Breast epithelium (tissue), 4 donors: ENCODE measurements at regions of chr19 and their contacts with region 1.

Region 1: DNA sequence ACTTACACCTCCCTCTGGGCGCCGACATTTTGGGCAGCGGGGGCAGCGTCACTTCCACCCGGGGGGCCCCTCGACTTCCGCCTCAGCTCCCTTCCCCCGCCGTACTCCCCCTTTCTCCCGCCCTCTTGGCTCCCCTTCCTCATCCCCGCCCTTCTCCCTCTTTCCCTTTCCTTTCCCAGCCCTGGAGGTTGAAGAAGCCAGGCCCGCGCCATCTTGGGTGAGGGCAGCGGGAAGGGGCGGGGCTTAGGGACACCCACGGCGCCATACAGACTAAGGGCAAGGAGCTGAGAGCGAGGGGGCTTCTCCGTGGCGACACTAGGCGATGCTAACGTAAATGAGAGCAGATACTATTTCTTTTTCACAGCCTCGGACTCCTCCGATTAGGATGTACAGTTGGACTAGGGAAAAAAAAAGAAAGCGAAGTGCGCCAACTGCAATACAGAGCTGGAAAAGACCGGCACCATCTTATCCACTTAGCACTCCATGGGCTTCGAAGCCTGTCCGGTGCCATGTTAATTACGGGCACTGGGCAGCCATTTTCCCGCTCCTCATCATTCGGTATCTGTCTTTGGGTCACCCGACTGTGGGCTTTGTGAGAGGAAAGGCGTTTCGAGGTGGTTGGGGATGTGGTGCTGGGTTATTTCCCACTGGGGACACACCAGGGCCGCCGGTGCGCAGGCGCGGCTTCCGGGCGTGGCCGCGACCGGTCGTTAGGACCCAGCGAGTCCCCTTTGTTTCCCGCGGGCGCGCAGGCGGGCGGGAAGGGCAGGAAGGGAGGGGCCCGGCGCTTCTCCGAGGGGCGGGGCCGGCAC is at the start of gene FIZ1:
- DNase-seq: peak; percentile 99
- H3K4me3 ChIP-seq: peak within 1 kb of the TSS; percentile 76 to 98 (median 81)
- H3K27ac ChIP-seq: peak within 1 kb of the TSS; percentile 98 to 100
- H3K4me1 ChIP-seq: no peaks in the 10 kb centered on the region
- H3K27me3 ChIP-seq: no peaks in the 10 kb centered on the region
- CTCF ChIP-seq: peak in 1 of 3 donors; percentile 29
- POLR2A ChIP-seq: no peak
- total RNA-seq, gene FIZ1: 3.7 to 7.5 (median 6.1) TPM

Region 2: GRCh38 chr19:55586976-55587668 is 12.6 kb before region 1 on chr19:
- intact Hi-C with region 1: loop called (anchors 1 kb)
- DNase-seq: peak; percentile 95 to 98
- H3K4me3 ChIP-seq: peak overlapping the region; percentile 6 to 62 (median 52)
- H3K27ac ChIP-seq: peak overlapping the region; percentile 58 to 71
- H3K4me1 ChIP-seq: no peaks in the 10 kb centered on the region
- H3K27me3 ChIP-seq: no peaks in the 10 kb centered on the region
- CTCF ChIP-seq: no peak
- POLR2A ChIP-seq: no peak

Region 3: DNA sequence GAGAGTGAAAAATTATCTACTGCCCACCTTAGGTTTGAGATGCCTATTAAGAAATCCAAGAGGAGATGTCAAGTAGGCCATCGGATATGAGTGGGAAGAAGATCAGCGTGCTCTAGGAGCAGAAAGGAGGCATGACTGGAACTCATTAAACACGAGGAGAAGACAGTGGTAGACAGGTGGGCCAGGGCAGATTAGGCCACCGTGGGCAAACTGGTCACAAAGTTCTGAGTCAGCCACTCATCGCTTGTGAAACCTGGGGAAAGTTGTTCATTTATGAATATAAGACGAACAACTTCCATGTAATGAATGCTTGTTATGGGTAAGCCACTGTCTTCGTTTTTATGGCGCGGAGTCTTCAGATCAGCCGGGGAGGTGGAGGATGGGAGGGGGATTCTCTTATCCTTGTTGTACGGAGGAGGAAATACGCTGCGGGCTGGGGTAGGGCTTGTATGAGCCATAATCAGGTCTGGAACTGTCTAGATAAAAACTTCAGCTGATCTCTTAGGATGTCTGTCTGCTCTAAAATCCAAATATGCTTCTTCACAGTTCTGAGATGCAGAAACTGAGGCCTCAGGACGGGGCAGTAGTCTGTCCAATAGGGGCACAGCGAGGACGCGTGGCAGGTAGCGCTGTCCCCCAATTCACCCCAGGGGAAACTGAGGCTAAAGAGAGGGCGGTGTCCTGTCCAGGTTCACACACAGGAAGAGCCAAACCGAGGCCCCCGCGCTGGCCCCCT is 540.3 kb after region 1 on chr19:
- intact Hi-C with region 1: loop called (anchors 5 kb)
- DNase-seq: peak in 1 of 2 donors; percentile 35
- H3K4me3 ChIP-seq: peak overlapping the region; percentile 60 to 76 (median 67)
- H3K27ac ChIP-seq: peak overlapping the region; percentile 97 to 98
- H3K4me1 ChIP-seq: peaks cover 0 to 22% of the 10 kb centered on the region in 2 donors
- H3K27me3 ChIP-seq: no peaks in the 10 kb centered on the region
- CTCF ChIP-seq: no peak
- POLR2A ChIP-seq: no peak